OCI-LY7 (cell line): ENCODE measurements at regions of chr20 and their contacts with region 1.

Region 1: GRCh38 chr20:35619196-35620095 is 3.8 kb downstream of the SPAG4 start:
- DNase-seq: peak; percentile 91
- H3K4me3 ChIP-seq: peak overlapping the region; percentile 73
- H3K27ac ChIP-seq: peak overlapping the region; percentile 37
- H3K4me1 ChIP-seq: peaks cover 36% of the 10 kb centered on the region
- CTCF ChIP-seq: peak; percentile 96

Region 2: DNA sequence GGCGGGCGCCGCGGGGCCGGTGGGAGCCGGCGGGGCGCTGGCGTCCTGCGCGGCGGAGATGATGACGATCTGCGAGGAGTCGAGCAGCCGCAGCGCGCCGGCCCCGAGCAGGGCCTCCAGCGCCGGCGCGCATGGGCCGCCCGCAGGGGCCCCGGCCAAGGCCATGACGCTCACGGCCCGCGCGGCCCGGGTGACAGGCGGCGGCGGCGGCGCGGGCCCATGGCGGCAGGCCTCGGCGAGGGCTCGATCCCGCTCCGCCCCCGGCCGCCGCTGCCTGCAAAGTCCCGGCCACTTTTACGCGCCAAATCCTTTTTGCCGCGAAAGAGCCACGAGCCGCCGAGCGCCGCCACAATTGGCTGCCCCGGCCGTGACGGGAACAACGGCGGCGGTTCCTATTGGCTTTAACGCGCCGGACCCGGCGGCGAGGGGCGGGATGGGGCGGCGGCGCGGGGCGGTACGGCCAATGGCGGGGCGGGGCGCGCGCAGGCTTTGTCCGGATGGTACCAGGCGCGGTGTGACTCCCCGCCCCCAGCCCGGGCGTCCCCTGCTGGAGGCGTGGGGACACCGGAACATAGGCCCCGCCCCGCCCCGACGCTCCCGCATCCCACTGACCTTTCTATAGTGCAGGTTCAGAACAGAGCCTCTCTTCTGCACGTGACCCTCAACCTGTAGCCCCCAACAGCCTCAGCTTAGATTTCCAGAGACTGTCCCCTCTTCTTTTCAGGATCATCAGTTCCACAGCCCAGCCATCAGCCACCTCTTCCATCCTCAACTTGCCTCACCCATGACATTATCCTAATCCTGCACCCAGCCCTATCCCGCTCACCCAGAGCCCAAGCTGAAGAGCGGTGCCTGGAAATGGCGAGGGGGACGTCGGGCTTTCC is 1933.1 kb before region 1 on chr20 and contains the start of gene E2F1:
- CTCF ChIA-PET with region 1: no interaction called
- POLR2A ChIA-PET with region 1: no interaction called
- intact Hi-C with region 1: loop called (anchors 10 kb)
- DNase-seq: peak; percentile 97
- H3K4me3 ChIP-seq: peak within 1 kb of the TSS; percentile 90
- H3K27ac ChIP-seq: peak within 1 kb of the TSS; percentile 94
- H3K4me1 ChIP-seq: peaks cover 71% of the 10 kb centered on the region
- CTCF ChIP-seq: 0 out of 2 replicates have a peak, but pooled peaks have one; percentile 50
- total RNA-seq, gene E2F1: 128 and 135 TPM in 2 replicates

Region 3: DNA sequence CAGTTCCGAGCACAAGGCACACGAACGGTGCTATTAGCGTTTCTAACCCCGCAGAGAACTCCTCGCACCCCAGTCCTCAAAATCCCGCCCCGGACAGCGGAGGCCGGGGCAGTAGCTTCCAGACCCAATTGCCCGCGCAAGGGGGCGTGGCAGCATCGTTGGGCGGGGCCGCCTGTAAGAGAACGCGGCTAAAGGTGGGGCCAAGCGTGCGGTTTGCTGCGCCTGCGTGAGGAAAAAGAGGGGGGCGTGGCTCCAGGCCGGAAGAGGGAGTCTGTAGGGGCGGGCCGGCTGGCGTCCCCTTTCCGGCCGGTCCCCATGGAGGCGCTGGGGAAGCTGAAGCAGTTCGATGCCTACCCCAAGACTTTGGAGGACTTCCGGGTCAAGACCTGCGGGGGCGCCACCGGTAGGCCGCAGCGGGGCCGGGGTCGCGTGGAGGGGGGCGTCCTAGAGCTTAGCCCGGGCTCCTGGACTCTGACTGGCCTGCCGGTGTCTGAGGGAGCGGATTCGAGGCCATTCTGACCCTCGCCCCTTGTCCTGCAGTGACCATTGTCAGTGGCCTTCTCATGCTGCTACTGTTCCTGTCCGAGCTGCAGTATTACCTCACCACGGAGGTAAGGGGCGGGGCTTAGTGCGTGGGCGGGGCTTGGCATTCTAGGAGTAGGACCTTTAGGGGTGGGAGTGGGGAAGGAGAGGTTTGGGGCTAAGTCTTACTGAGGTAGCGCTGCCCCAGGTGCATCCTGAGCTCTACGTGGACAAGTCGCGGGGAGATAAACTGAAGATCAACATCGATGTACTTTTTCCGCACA is 77.5 kb before region 1 on chr20 and contains the start of gene ERGIC3:
- CTCF ChIA-PET with region 1: no interaction called
- POLR2A ChIA-PET with region 1: interaction called, 4 read pairs
- intact Hi-C with region 1: loop called (anchors 5 kb)
- DNase-seq: peak; percentile 97
- H3K4me3 ChIP-seq: peak within 1 kb of the TSS; percentile 84
- H3K27ac ChIP-seq: peak within 1 kb of the TSS; percentile 43
- H3K4me1 ChIP-seq: peaks cover 25% of the 10 kb centered on the region
- CTCF ChIP-seq: no peak
- total RNA-seq, gene ERGIC3: 171 and 178 TPM in 2 replicates

Region 4: GRCh38 chr20:35601008-35601973 is 18.2 kb before region 1 on chr20:
- CTCF ChIA-PET with region 1: interaction called, 8 read pairs
- POLR2A ChIA-PET with region 1: interaction called, 20 read pairs
- intact Hi-C with region 1: no loop called
- DNase-seq: peak; percentile 63
- H3K4me3 ChIP-seq: peak overlapping the region; percentile 26
- H3K27ac ChIP-seq: no peak overlapping the region
- H3K4me1 ChIP-seq: peaks cover 37% of the 10 kb centered on the region
- CTCF ChIP-seq: peak; percentile 62

Region 5: DNA sequence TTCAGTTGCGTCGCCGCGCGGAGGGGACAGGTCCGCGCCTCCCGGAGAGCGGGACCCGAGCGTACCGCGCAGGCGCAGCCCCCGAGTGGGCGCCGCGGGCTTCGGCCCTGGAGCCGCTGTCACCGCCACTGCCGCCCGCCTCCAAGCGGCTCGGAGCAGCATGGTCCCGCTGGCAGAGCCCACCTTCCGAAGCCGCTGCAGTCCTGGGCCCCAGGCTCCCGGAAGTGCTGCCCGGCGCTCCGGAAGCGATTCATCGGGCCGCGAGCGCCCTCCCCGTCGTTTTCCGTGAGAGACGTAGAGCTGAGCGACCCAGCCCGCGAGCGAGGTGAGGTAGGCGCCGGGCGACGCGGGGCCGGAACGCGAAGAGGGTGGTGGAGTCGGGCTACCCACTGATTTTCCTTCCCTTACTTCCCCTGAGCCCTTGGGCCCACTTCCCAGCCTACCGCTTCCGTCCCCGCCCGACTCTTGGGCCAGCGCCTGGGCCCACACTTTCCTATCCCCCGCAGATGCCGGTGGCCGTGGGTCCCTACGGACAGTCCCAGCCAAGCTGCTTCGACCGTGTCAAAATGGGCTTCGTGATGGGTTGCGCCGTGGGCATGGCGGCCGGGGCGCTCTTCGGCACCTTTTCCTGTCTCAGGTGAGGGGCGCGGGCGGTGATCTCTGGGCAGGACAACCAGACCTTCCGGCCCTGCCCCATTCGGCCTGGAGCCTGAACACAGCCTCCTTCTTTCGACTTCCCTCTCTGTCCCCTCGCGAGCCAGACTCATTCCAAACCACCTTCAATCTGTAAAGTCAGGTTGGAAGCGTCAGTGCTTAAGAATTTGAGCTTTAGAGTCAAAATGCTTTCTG is 79.9 kb after region 1 on chr20 and contains the starts of genes NFS1 and ROMO1:
- CTCF ChIA-PET with region 1: interaction called, 6 read pairs
- POLR2A ChIA-PET with region 1: interaction called, 7 read pairs
- intact Hi-C with region 1: loop called (anchors 5 kb)
- DNase-seq: peak; percentile 92
- H3K4me3 ChIP-seq: peak within 1 kb of the TSS; percentile 87
- H3K27ac ChIP-seq: peak within 1 kb of the TSS; percentile 74
- H3K4me1 ChIP-seq: peaks cover 23% of the 10 kb centered on the region
- CTCF ChIP-seq: peak; percentile 44; the same call in 1 of the 2 replicates
- total RNA-seq, gene NFS1: 32.8 and 56.2 TPM in 2 replicates
- total RNA-seq, gene ROMO1: 393 and 411 TPM in 2 replicates

Region 6: DNA sequence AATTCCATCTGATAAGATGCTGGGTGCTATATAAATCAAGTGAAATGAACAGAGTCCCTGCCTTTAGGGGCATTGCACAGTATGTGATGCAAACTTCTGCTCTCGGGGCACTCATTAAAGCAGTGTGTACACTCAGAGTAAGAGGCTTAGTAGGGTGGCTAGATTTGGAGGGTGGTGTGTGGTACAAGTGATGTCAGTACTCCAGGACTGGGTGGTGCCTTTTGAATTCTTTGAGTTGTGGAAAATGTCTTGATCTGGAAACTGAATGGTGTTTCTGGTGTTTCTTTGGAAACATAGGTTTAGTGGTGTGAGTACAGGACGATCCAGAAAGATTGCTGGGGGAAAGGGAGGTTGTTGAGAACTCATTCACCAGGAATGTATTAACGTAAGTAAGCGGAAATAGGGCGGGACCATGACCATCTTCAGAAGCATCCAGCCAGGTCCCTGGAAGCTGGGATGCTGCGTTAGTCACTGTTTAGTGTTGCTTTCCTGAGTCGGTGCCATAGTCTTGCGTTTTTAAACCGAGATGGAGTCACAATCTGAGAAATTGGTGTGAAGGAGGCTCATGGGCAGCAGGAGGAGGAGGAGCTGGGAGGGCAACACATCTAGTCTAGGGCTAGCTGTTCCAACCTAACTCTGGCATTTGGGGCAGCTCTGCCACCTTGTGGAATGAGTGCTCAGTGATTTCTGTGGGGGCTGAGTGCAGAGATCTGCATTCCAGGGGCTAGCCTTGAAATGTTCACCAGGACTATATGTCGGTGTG is 264.5 kb after region 1 on chr20:
- CTCF ChIA-PET with region 1: no interaction called
- POLR2A ChIA-PET with region 1: no interaction called
- intact Hi-C with region 1: loop called (anchors 5 kb)
- DNase-seq: peak; percentile 72
- H3K4me3 ChIP-seq: no peak overlapping the region
- H3K27ac ChIP-seq: no peak overlapping the region
- H3K4me1 ChIP-seq: no peaks in the 10 kb centered on the region
- CTCF ChIP-seq: peak; percentile 86